HEK293 (cell line): ENCODE measurements at regions of chr19 and their contacts with region 1.

Region 1: DNA sequence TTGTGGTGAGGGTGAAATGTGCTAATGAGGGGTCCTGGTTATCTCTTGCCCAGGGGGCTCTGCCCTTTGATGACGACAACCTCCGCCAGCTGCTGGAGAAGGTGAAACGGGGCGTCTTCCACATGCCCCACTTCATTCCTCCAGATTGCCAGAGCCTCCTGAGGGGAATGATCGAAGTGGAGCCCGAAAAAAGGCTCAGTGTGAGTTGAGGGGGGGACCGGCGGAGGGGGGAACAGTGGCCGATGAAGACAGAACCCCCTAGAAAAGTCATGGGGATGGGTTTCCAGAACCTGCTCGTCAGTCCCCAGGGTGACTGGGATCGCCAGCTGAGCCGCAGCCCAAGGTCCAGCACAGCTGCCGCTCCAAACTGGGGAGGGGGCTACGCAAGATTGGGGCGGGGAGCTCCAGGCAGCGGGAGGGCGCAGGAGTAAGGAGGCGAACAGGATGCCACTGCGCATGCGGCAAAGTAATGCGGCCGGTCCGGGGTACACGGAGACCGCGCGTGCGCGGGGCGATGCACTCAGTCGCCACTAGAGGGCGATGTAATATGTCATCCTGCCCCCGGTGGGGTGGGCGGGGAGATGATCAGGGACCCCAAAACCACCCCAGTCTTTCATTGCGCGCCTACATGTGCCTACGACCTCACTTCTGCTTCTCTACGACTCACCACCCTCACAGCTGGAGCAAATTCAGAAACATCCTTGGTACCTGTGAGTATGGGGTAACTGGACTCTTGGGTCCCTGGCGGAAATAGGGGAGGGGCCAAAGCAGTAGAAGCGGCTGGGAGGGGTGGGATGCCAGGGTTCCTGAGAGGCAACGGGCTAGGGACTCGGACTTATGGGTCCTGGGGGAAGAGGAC is 17.9 kb downstream of the BRSK1 start:
- H3K4me3 ChIP-seq: peak overlapping the region; percentile 18
- H3K27ac ChIP-seq: no peak overlapping the region; the same call in 1 of the 2 replicates
- H3K4me1 ChIP-seq: peaks cover 3% of the 10 kb centered on the region; the same call in 1 of the 2 replicates
- CTCF ChIP-seq: peak; percentile 93

Region 2: DNA sequence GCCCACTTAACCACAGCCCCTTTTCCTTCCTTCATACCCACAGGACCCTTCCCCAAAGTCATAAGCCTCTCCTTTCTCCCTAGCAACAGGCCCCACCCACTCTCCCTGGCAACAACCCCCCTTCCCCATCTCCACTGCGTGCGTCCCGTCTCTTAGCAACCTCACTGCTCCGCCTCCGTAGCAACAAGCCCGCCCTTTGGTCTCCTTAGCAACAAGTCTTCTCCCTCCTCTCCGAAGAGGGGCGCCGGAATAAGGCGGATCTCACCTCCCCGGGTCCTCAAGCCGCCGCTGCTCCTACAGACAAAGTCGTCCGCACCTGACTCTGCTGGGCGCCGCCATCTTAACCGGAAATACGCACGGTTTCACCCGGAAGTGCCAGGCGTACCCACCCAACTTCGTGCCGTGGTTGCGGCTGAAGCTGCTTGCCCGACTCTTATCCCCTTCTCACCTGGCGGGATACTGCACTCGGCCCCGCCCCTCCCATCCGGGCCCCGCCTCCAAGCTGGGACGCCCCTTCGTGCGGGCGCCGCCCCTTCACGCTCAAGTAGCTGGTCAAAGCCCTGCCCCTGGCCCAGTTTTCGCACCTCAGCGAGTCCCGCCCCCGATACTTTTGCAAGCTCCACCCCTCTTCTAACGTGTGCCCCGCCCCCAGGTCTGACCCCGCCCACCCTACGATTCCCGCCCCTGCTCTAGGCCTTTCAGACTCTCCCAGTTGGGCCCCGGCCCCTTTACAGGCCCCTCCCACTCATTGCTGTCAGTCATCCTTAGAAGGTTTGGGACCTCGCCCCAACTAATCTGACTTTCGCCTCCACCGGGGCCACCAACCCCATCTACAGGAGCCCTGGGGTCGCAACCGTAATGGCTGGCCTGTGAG is 21.7 kb before region 1 on chr19 and contains the start of gene HSPBP1:
- CTCF ChIA-PET with region 1: interaction called, 10 read pairs
- POLR2A ChIA-PET with region 1: interaction called, 5 read pairs
- H3K4me3 ChIP-seq: peak within 1 kb of the TSS; percentile 97
- H3K27ac ChIP-seq: peak within 1 kb of the TSS; percentile 57
- H3K4me1 ChIP-seq: peaks cover 12% of the 10 kb centered on the region
- CTCF ChIP-seq: no peak

Region 3: DNA sequence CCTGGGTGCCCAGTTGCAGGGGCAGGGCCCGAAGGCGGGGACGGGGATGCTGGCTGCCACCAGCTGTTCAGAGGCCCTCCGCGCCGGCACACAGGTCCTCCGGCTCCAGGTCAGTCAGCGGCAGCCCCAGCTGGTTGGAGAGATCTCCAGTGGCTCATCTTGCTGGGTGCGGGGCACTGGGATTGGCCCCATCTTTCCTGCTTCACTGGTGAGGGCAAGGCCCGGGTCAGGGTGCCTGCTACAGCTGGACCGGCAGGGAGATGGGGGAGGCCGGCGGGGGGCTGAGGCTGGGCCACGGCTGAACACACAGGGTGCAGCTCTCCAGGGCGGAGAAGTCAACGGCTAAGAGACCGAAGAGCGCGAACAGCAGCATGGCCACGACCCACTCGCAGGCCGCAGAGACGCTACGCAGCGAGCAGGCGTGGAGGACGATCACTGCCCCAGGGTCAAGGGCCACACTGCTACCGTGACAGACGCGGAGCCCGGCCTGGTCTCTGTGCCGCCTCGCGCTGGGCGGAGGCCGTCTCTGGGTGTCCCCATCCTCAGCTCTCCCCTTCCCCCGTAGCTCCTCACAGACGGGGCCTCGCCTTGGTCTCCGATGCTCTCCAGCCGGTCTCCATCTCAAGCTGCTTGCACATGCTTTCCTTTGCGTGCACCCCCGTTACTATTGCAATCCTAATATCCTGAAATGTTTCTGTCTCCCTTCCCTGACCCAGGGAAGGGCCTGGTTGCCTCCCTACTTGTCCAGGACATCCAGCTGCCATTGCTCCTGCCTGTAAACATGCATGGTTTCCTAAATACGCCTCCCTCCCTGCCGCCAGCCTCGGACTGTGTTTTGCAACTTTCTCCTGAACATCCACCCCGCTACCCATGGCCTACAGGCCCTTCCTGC is 11.2 kb after region 1 on chr19:
- CTCF ChIA-PET with region 1: interaction called, 45 read pairs
- POLR2A ChIA-PET with region 1: no interaction called
- H3K4me3 ChIP-seq: no peak overlapping the region
- H3K27ac ChIP-seq: no peak overlapping the region
- H3K4me1 ChIP-seq: no peaks in the 10 kb centered on the region
- CTCF ChIP-seq: no peak

Region 4: GRCh38 chr19:55348317-55349034 is 46.8 kb after region 1 on chr19:
- CTCF ChIA-PET with region 1: interaction called, 22 read pairs
- POLR2A ChIA-PET with region 1: interaction called, 5 read pairs
- H3K4me3 ChIP-seq: no peak overlapping the region
- H3K27ac ChIP-seq: no peak overlapping the region
- H3K4me1 ChIP-seq: peaks cover 5% of the 10 kb centered on the region; the same call in 1 of the 2 replicates
- CTCF ChIP-seq: no peak

Region 5: GRCh38 chr19:55391702-55392615 is 90.3 kb after region 1 on chr19:
- CTCF ChIA-PET with region 1: interaction called, 20 read pairs
- POLR2A ChIA-PET with region 1: interaction called, 8 read pairs
- H3K4me3 ChIP-seq: no peak overlapping the region
- H3K27ac ChIP-seq: no peak overlapping the region
- H3K4me1 ChIP-seq: peaks cover 24% of the 10 kb centered on the region
- CTCF ChIP-seq: no peak

Region 6: GRCh38 chr19:55464039-55465019 is 162.6 kb after region 1 on chr19 and contains the start of gene C19orf85:
- CTCF ChIA-PET with region 1: no interaction called
- POLR2A ChIA-PET with region 1: no interaction called
- H3K4me3 ChIP-seq: no peak within 1 kb of the TSS
- H3K27ac ChIP-seq: no peak within 1 kb of the TSS
- H3K4me1 ChIP-seq: peaks cover 12% of the 10 kb centered on the region
- CTCF ChIP-seq: no peak